ENCODE measurements at regions of chr17 and their contacts with region 1.

Region 1: GRCh38 chr17:2087597-2088211 is 32.8 kb downstream of the HIC1 start:
- DNase-seq: no peak
- H3K4me3 ChIP-seq: no peak overlapping the region
- H3K27ac ChIP-seq: no peak overlapping the region
- H3K4me1 ChIP-seq: peaks cover 32% of the 10 kb centered on the region
- H3K27me3 ChIP-seq: no peaks in the 10 kb centered on the region
- CTCF ChIP-seq: no peak

Region 2: DNA sequence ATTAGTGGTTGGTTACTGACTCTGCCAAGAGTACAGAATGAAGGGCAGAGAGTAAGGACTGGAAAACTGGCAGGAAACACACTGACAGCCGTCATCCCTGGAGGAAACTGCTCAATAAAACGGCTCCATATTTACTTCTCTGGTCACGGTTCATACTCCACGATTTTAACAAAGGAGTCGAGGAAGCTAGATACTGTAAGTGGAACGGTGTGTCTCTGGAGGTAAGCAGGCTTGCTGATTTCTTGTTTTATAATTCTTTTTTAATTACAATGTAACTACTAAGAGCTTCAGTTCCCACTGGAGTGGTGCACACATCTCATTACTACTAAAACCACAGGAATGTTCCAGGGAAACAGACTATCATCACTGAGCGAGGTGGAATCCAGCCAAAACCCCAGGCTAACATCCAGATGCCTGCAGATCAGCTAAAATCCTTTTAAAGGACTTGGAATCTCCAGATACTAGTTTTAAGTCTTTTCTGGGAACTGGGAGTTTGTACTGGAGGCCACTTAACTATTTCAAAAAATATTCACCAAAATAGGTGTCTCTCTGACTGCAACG is 308.1 kb before region 1 on chr17:
- CTCF ChIA-PET with region 1: no interaction called
- dilution Hi-C with region 1: no loop called
- in situ Hi-C with region 1: no loop called
- intact Hi-C with region 1: no loop called
- DNase-seq: peak; percentile 85
- H3K4me3 ChIP-seq: peak overlapping the region in 1 of 3 experiments; percentile 21
- H3K27ac ChIP-seq: peak overlapping the region; percentile 74
- H3K4me1 ChIP-seq: peaks cover 25% of the 10 kb centered on the region
- H3K27me3 ChIP-seq: no peaks in the 10 kb centered on the region
- CTCF ChIP-seq: no peak

Region 3: GRCh38 chr17:2122641-2123302 is 35.1 kb after region 1 on chr17:
- CTCF ChIA-PET with region 1: no interaction called
- dilution Hi-C with region 1: loop called (anchors 5 kb)
- in situ Hi-C with region 1: no loop called
- intact Hi-C with region 1: no loop called
- DNase-seq: peak; percentile 71
- H3K4me3 ChIP-seq: no peak overlapping the region
- H3K27ac ChIP-seq: no peak overlapping the region
- H3K4me1 ChIP-seq: peaks cover 15% of the 10 kb centered on the region
- H3K27me3 ChIP-seq: no peaks in the 10 kb centered on the region
- CTCF ChIP-seq: no peak

Region 4: DNA sequence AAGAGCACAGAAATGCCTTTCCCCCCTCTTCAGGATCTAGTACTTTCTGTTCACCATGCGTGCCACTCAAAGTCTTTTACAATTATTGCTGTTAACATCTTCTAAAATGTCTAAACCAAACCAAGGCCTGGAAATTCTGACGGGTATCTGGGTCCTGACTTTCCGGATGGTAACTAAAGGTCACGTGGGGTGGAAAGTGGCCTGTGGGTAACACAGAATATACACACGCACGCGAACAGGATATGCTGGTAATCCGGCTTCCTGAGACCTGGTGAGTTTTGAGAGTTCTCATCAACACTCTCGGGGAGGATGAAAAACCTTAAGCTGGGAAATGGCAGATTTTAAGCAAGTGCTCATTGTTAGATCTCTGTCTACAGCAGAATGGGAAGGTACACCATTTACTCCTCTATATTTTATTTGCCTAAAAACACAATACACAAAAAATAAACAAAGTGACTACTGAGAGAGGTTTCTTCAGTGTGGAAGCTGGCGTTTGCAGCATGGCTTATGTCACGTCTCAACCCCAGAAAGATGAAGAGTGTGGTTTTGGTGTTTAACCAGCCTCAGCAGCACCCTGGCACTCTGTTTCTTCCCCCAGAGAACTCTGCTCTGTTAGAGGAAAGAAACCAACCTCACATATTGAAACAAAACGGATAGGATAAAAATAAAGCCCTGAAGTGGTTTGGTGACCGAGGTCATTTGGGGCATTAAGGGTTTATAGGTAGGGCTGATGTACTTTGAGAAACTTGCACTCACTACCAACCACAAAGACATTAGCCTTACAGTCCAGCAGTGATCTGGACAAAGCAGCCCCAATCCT is 178.6 kb after region 1 on chr17:
- CTCF ChIA-PET with region 1: no interaction called
- dilution Hi-C with region 1: loop called (anchors 5 kb)
- in situ Hi-C with region 1: no loop called
- intact Hi-C with region 1: no loop called
- DNase-seq: no peak
- H3K4me3 ChIP-seq: no peak overlapping the region
- H3K27ac ChIP-seq: no peak overlapping the region
- H3K4me1 ChIP-seq: peaks cover 12% of the 10 kb centered on the region
- H3K27me3 ChIP-seq: no peaks in the 10 kb centered on the region
- CTCF ChIP-seq: no peak